HepG2 (cell line): ENCODE measurements at regions of chr2 and their contacts with region 1.

Region 1: GRCh38 chr2:27723372-27724144 is 48.0 kb upstream of the MRPL33 start:
- DNase-seq: peak; percentile 75
- ATAC-seq: peak; percentile 79
- H3K4me3 ChIP-seq: peak overlapping the region; percentile 22 to 69 (median 33); a peak in 4 of 6 replicates
- H3K27ac ChIP-seq: no peak overlapping the region
- H3K4me1 ChIP-seq: peaks cover 58% of the 10 kb centered on the region
- H3K27me3 ChIP-seq: no peaks in the 10 kb centered on the region
- CTCF ChIP-seq: peak; percentile 94
- EP300 ChIP-seq: no peak
- POLR2A ChIP-seq: no peak
- RAD21 ChIP-seq: peak; percentile 85

Region 2: GRCh38 chr2:27431395-27431794 is 292.2 kb before region 1 on chr2:
- CTCF ChIA-PET with region 1: no interaction called
- POLR2A ChIA-PET with region 1: no interaction called
- in situ Hi-C with region 1: no loop called
- intact Hi-C with region 1: no loop called
- DNase-seq: peak; percentile 40
- ATAC-seq: no peak
- H3K4me3 ChIP-seq: no peak overlapping the region
- H3K27ac ChIP-seq: no peak overlapping the region
- H3K4me1 ChIP-seq: peaks cover 40% of the 10 kb centered on the region
- H3K27me3 ChIP-seq: no peaks in the 10 kb centered on the region; a peak in 1 of 5 replicates
- CTCF ChIP-seq: no peak
- EP300 ChIP-seq: no peak
- POLR2A ChIP-seq: no peak
- RAD21 ChIP-seq: no peak

Region 3: DNA sequence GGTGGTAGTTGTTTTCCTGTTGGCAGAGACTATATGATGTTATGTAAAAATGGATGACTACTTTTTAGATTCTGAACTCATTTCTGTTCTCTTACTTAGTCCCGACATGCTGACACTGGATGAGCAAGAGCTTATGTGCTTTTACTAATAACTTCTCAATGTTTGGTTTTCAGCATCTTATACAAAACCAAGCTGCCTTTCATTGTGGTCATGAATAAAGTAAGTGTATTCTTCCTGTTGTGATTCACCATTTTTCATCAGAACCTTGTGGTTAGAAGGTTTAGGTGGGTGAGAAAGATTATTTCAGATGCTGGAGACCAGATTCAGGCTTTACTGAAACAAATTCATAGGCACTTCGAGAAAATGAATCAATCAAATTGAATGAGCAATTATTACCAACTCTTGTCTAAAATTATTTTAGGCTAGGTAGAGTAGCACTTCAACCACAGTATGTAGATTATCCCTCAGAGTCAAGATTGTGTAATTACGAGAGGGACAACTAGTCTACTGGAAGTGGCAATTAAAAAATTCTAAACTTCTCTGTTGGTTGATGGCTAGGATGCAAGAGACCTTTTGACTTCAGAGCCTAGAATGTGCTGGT is 85.4 kb before region 1 on chr2:
- CTCF ChIA-PET with region 1: no interaction called
- POLR2A ChIA-PET with region 1: no interaction called
- in situ Hi-C with region 1: no loop called
- intact Hi-C with region 1: no loop called
- DNase-seq: no peak
- ATAC-seq: no peak
- H3K4me3 ChIP-seq: no peak overlapping the region
- H3K27ac ChIP-seq: no peak overlapping the region
- H3K4me1 ChIP-seq: no peaks in the 10 kb centered on the region
- H3K27me3 ChIP-seq: no peaks in the 10 kb centered on the region
- CTCF ChIP-seq: no peak
- EP300 ChIP-seq: no peak
- POLR2A ChIP-seq: no peak
- RAD21 ChIP-seq: no peak

Region 4: GRCh38 chr2:27735263-27735953 is 11.8 kb after region 1 on chr2:
- CTCF ChIA-PET with region 1: no interaction called
- POLR2A ChIA-PET with region 1: interaction called, 69 read pairs
- in situ Hi-C with region 1: no loop called
- intact Hi-C with region 1: loop called (anchors 2 kb)
- DNase-seq: no peak
- ATAC-seq: no peak
- H3K4me3 ChIP-seq: no peak overlapping the region
- H3K27ac ChIP-seq: no peak overlapping the region
- H3K4me1 ChIP-seq: peaks cover 47% of the 10 kb centered on the region
- H3K27me3 ChIP-seq: no peaks in the 10 kb centered on the region
- CTCF ChIP-seq: no peak
- EP300 ChIP-seq: no peak
- POLR2A ChIP-seq: no peak
- RAD21 ChIP-seq: no peak

Region 5: DNA sequence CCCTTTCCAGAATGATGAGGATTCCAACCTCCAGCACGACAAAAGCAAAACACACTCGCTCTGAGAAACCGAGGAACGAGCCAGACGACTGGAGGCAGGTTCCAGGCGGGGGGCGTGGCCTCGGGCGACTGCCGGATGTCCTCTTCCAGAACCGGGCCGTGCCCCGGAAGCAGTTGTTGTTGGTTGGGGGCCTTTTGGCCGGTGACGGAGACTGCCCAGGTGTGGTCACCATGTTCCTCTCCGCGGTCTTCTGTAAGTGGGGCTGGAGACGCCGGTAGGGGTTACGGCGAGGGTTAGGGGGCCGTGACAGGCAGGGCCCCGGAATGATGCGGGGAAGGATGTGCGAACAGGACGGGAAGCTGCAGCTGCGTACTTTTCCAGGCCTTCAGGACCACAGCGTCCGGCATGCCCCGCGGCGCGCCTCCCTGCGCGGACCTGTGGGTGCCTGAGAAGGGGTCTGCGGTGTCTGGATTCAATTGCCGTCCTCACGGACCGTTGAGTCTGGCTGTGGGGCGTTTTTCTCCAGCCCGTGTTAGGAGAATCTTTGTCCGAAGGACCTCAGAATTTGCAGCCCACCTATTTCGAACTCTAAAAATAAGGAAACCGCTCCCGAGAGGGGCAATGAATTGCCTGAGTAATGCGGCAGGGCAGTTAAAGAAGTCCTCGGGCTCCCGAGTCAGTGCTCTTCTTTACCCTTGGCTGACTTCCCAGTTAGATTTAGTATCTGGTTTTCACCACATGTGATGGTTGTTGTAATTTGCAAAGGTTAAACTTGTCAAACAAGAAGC is 48.2 kb after region 1 on chr2 and contains the start of gene MRPL33:
- CTCF ChIA-PET with region 1: no interaction called
- POLR2A ChIA-PET with region 1: interaction called, 7 read pairs
- in situ Hi-C with region 1: no loop called
- intact Hi-C with region 1: loop called (anchors 5 kb)
- DNase-seq: peak; percentile 93
- ATAC-seq: peak; percentile 97
- H3K4me3 ChIP-seq: peak within 1 kb of the TSS; percentile 93 to 98 (median 94)
- H3K27ac ChIP-seq: peak within 1 kb of the TSS; percentile 85
- H3K4me1 ChIP-seq: peaks cover 39% of the 10 kb centered on the region
- H3K27me3 ChIP-seq: no peaks in the 10 kb centered on the region; a peak in 1 of 5 replicates
- CTCF ChIP-seq: peak; percentile 33
- EP300 ChIP-seq: peak in 1 of 2 experiments; percentile 54; a peak in 1 of 4 replicates
- POLR2A ChIP-seq: peak; percentile 91 to 92
- RAD21 ChIP-seq: peak; percentile 35; the same call in 1 of the 2 replicates
- total RNA-seq, gene MRPL33: 218 and 227 TPM in 2 replicates